H1 (cell line): ENCODE measurements at regions of chr6 and their contacts with region 1.

Region 1: GRCh38 chr6:32127717-32128592 is at the start of gene ATF6B:
- DNase-seq: peak; percentile 91 to 96
- H3K4me3 ChIP-seq: peak within 1 kb of the TSS; percentile 95 to 100 (median 99)
- H3K27ac ChIP-seq: peak within 1 kb of the TSS; percentile 98
- H3K4me1 ChIP-seq: peaks cover 3 to 19% (median 8%) of the 10 kb centered on the region in 4 experiments; a peak in 6 of 7 replicates
- H3K27me3 ChIP-seq: no peaks in the 10 kb centered on the region
- CTCF ChIP-seq: no peak
- EP300 ChIP-seq: no peak
- POLR2A ChIP-seq: peak; percentile 52 to 86; a peak in 2 of 3 replicates
- RAD21 ChIP-seq: no peak
- total RNA-seq, gene ATF6B: 36.2 and 38.1 TPM in 2 replicates

Region 2: DNA sequence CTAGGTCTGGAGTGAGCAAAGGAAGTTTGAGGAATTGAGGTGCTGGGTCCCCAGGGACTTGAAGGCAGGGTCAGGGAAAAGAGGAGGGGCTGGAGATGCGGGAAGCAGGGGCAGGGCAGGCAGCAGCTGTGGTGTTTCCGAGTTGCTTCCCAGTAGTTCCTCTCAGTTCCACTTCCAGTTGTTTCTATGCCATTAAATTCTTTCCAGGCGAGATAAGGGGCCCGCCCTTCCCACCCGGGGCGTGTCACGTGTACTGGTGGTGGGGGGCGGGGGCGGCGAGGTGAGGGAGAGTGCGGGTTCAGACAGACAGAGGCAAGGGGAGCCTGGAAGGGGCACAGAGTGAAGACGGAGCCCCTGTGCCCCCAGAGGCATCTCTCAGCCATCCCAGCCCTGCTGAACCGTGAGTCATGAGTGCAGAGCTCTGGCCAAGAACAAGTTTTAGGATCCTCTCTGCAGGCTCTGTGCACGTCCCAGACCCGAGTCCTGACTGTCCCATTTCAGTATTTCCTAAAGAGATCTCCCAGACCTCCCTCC is 19.8 kb before region 1 on chr6:
- CTCF ChIA-PET with region 1: interaction called, 3 read pairs
- POLR2A ChIA-PET with region 1: interaction called, 15 read pairs
- DNase-seq: no peak
- H3K4me3 ChIP-seq: peak overlapping the region in 3 of 4 experiments; percentile 5 to 9 (median 9); a peak in 3 of 8 replicates
- H3K27ac ChIP-seq: no peak overlapping the region
- H3K4me1 ChIP-seq: peaks cover 2 to 13% (median 7%) of the 10 kb centered on the region in 4 experiments
- H3K27me3 ChIP-seq: peaks cover 0 to 11% (median 6%) of the 10 kb centered on the region in 4 experiments; a peak in 5 of 7 replicates
- CTCF ChIP-seq: no peak
- EP300 ChIP-seq: no peak
- POLR2A ChIP-seq: no peak
- RAD21 ChIP-seq: no peak

Region 3: DNA sequence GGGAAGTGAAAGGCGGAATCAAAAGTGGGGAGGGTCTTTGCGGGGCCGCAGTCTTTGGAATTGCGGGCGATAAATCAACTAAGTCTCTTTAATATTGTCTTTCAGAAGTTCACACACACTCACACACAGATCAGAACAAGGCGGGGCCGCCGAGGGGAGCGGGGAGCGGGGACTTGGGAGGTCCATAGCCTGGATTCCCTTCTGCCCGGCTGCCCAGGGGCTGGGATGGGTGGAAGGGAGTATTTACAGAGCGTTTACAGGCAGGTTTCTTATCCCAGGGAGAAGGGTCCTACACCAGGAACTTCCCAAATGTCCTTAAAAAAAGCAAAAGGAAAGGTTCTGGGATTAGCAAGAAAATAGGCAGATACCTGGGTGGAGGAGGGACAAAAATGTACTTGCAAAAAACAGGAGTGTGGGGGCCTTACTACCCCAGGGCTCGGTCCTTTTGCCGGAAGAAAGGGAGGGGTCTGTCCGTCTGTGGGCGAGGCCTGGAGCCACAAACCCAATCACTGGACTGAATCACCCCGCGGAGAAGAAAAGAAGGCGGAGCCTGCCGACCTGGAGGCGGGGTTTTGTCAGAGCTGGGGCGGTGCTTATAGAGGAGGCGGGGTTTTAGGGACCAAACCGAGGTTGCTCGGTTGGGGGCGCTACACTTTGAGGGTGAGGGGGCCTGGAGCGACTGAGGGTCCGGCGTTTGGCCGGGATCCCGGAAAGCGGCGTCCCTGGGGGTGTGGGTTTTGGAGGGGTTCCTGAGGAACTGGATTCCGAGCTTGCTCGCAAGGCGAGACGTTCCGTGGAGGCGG is 20.5 kb after region 1 on chr6:
- CTCF ChIA-PET with region 1: interaction called, 23 read pairs
- POLR2A ChIA-PET with region 1: interaction called, 70 read pairs
- DNase-seq: peak; percentile 72 to 90
- H3K4me3 ChIP-seq: peak overlapping the region; percentile 51 to 76 (median 70)
- H3K27ac ChIP-seq: no peak overlapping the region
- H3K4me1 ChIP-seq: peaks cover 10 to 33% (median 16%) of the 10 kb centered on the region in 4 experiments
- H3K27me3 ChIP-seq: peaks cover 4 to 41% (median 37%) of the 10 kb centered on the region in 4 experiments
- CTCF ChIP-seq: peak in 2 of 3 experiments; percentile 39 to 60; a peak in 3 of 4 replicates
- EP300 ChIP-seq: no peak
- POLR2A ChIP-seq: no peak
- RAD21 ChIP-seq: no peak; a peak in 1 of 4 replicates

Region 4: DNA sequence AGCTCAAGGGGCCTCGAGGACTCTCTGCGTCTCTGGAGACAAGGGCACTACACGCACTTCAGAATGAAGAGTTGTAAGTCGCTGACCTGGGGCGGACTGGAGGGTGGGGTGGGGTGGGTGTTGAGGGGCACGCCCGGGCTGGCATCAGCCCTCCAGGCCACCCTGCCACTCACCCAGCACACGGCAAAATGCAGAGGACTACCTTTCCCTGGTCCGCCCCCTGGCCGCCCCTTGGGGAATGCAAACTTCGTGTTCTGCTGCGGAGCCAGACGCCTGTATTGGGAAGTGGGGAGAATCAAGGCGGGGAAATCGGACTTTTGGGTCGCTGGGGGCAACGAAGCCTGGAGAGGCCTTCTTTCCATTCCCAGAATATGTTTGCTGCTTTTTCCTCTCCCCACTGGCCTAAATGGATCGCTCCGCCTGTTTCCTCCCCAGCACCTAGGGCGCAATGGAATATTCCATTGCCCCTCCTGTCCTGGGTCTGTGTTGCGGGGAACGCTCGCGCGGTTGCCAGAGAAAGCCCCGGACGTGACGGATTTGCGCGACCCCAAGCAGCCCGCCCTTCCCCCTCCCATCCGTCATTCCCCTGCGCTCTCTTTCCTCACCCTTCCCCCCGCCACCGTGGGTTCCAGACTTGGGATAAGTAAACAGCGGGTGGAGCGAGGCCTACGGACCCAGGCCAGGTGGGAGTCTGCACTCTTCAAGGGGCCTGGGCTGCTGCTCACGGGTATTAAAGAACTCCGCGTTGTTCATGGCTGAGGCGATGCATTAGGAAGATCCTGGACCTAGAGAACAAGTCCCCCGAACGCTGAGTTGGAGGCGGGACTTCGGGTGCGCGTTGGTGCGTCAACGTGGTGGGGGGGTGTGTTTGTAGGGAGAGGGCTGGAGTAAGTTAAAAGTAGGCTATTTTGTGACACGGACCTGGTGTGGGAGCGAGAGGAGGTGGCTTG is 25.9 kb after region 1 on chr6 and contains the start of gene PPT2:
- CTCF ChIA-PET with region 1: interaction called, 23 read pairs
- POLR2A ChIA-PET with region 1: interaction called, 70 read pairs
- DNase-seq: peak; percentile 74 to 88
- H3K4me3 ChIP-seq: peak within 1 kb of the TSS; percentile 77 to 98 (median 92)
- H3K27ac ChIP-seq: peak within 1 kb of the TSS; percentile 70
- H3K4me1 ChIP-seq: peaks cover 10 to 28% (median 16%) of the 10 kb centered on the region in 4 experiments
- H3K27me3 ChIP-seq: peaks cover 4 to 40% (median 37%) of the 10 kb centered on the region in 4 experiments
- CTCF ChIP-seq: peak in 2 of 3 experiments; percentile 13 to 24; a peak in 3 of 4 replicates
- EP300 ChIP-seq: peak in 1 of 2 experiments; percentile 97; a peak in 2 of 3 replicates
- POLR2A ChIP-seq: peak in 1 of 2 experiments; percentile 71; a peak in 1 of 3 replicates
- RAD21 ChIP-seq: 0 out of 4 replicates have a peak, but pooled peaks of 1 of the 2 experiments have one; percentile 9
- total RNA-seq, gene PPT2: 24.1 and 27.9 TPM in 2 replicates

Region 5: GRCh38 chr6:32166411-32167061 is 38.6 kb after region 1 on chr6:
- CTCF ChIA-PET with region 1: interaction called, 7 read pairs
- POLR2A ChIA-PET with region 1: interaction called, 15 read pairs
- DNase-seq: peak; percentile 61 to 92
- H3K4me3 ChIP-seq: no peak overlapping the region
- H3K27ac ChIP-seq: peak overlapping the region; percentile 33; the same call in 1 of the 2 replicates
- H3K4me1 ChIP-seq: peaks cover 0 to 5% (median 2%) of the 10 kb centered on the region in 4 experiments; a peak in 3 of 7 replicates
- H3K27me3 ChIP-seq: no peaks in the 10 kb centered on the region
- CTCF ChIP-seq: peak in 2 of 3 experiments; percentile 67 to 71; a peak in 3 of 4 replicates
- EP300 ChIP-seq: no peak
- POLR2A ChIP-seq: no peak
- RAD21 ChIP-seq: peak; percentile 71 to 74

Region 6: DNA sequence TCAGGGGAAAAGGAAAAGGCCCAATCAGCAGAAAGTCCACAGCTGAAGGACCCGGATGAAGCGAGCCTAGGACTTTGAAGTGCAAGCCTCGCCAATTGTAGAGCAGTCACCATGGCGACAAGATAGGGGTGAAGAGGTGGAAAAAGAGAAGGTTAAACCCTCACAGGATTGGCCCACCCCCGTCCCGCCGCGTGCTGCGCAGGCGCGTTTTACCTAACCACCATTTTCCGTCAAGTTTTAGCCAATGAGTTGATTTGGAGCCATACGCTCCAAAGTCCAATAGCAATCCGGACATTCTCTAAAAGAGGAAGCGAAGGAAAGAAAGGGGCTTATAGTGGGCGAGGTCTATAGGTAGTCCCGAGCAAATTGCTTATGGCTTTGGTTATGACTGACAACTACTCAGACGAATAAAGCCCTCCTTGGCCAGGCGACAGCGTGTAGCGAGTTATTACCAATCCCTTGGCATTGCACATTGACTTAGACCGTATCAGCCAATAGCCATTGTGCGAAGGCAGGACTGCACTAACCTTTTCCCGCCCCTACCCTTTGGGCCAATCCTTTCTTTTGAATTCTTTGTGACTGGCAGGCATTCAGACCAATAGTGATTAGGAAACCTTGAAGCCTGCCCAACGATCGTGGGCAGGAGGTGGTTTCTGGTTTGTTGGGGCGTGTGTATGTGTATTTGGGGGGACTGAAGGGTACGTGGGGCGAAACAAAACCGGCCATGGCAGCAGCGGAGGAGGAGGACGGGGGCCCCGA is 50.0 kb after region 1 on chr6 and contains the start of gene RNF5:
- CTCF ChIA-PET with region 1: interaction called, 7 read pairs
- POLR2A ChIA-PET with region 1: interaction called, 42 read pairs
- DNase-seq: peak; percentile 82 to 91
- H3K4me3 ChIP-seq: peak within 1 kb of the TSS; percentile 91 to 99 (median 95)
- H3K27ac ChIP-seq: peak within 1 kb of the TSS; percentile 95
- H3K4me1 ChIP-seq: peaks cover 5 to 20% (median 9%) of the 10 kb centered on the region in 4 experiments; a peak in 6 of 7 replicates
- H3K27me3 ChIP-seq: no peaks in the 10 kb centered on the region; a peak in 1 of 7 replicates
- CTCF ChIP-seq: no peak
- EP300 ChIP-seq: no peak
- POLR2A ChIP-seq: peak in 1 of 2 experiments; percentile 71; a peak in 1 of 3 replicates
- RAD21 ChIP-seq: no peak
- total RNA-seq, gene RNF5: 90.0 and 90.3 TPM in 2 replicates

Region 7: GRCh38 chr6:32195652-32195901 is 67.6 kb after region 1 on chr6:
- CTCF ChIA-PET with region 1: no interaction called
- POLR2A ChIA-PET with region 1: interaction called, 13 read pairs
- DNase-seq: peak; percentile 100
- H3K4me3 ChIP-seq: peak overlapping the region in 3 of 4 experiments; percentile 66 to 97 (median 79); a peak in 6 of 8 replicates
- H3K27ac ChIP-seq: peak overlapping the region; percentile 86; the same call in 1 of the 2 replicates
- H3K4me1 ChIP-seq: peaks cover 8 to 40% (median 24%) of the 10 kb centered on the region in 4 experiments
- H3K27me3 ChIP-seq: no peaks in the 10 kb centered on the region
- CTCF ChIP-seq: peak in 2 of 3 experiments; percentile 21 to 66; a peak in 2 of 4 replicates
- EP300 ChIP-seq: no peak
- POLR2A ChIP-seq: no peak; a peak in 1 of 3 replicates
- RAD21 ChIP-seq: peak in 1 of 2 experiments; percentile 37; a peak in 2 of 4 replicates